ENCODE measurements at regions of chr14 and their contacts with region 1.

Region 1: DNA sequence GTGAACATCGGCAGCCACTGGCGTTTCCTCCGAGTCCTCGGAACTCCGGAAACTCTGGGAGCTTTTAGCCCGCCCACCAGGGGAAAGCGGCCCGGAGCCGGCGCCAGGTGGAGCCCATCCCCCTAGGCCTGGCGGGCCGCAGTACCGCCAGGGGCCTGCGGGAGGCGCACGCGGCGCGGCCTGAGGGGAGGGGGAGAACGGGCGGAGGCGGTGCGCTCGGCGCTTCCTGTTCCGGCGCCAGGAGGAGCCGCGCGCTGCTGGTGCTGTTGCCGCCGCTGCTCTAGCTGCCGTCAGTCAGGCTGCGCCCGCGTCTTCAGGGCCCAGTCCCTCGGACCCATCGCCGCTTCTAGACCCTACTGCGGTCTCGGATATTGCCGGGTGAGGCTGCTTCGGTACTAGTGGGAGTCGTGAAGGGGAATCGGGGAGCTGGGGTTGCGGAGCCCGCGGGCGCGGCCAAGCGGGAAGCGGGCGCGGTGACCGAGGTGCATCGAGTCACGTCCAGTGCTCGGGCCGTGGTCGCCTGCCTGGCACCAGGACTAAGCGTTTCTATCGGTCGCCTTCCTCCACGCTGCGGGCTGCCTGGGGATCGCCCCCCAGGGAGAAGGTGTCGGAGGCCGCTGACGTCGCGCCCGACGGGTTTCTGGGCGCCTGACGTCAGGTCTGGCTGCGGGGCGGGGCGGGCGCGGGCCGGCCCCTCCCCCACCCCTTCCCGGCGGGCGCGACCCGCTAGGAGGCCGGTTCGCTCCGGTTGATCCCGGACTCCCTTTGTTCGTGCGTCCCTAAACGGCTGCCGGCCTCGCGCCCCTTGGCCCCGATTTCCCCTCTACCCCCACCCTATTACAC is at the start of gene MAPK1IP1L:
- DNase-seq: peak; percentile 95
- ATAC-seq: peak; percentile 93
- H3K4me3 ChIP-seq: peak within 1 kb of the TSS; percentile 69 to 99 (median 97)
- H3K4me3 Mint-ChIP-seq: peak within 1 kb of the TSS; percentile 93
- H3K27ac ChIP-seq: peak within 1 kb of the TSS; percentile 100
- H3K27ac Mint-ChIP-seq: peak within 1 kb of the TSS; percentile 95
- H3K4me1 ChIP-seq: peaks cover 18 to 25% of the 10 kb centered on the region in 2 donors
- H3K4me1 Mint-ChIP-seq: peaks cover 39% of the 10 kb centered on the region
- H3K27me3 ChIP-seq: no peaks in the 10 kb centered on the region
- H3K27me3 Mint-ChIP-seq: no peaks in the 10 kb centered on the region
- CTCF ChIP-seq: peak; percentile 99
- total RNA-seq, gene MAPK1IP1L: 108 and 116 TPM in 2 replicates

Region 2: DNA sequence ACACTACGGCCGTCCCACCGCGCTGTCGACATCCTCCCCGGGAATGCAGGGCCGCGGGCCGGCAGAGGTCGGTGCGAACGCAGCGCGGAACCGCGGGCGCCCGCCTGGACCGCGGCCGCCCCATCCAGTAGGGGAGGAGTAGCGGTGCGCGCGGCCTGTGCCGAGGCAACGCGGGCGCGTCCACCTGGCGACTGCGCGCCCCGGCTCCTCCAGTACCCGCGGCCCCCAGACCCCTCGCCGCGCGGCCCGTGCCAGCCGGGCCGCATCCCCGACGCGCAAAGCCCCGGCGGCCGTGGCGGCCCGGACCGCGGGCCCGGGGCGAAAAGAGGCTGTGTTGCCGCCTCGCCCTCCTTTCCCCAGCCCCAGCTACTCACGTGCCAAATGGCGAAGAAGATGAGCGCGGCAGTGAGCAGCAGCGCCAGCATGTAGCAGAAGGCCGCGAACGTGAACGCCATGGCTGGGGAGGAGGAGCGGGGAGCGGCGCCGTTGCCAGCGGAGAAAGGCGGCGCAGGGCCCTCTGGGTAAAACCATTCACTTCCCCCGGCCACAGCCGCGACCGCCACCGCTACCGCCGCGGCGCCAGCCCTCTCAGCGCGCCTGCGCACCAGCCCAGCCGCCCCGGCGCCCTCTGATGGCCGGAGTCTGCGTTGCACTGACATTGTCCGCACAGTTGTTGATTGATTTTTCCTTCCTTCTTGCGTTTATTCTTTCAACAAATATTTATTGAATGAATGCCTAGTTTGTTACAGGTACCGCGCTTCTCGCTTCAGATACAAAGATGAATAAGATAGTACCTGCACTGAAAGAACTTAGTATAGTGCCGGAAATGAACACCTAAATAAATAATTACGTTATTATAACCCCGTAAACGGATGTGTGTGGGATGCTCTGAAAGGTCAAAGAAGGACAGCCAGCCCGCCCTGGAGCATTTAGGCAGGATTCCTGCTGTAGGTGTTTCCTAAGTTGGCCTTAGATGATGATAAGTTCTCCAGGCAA is 610.5 kb before region 1 on chr14 and contains the start of gene CNIH1:
- CTCF ChIA-PET with region 1: no interaction called
- POLR2A ChIA-PET with region 1: no interaction called
- intact Hi-C with region 1: loop called (anchors 5 kb)
- DNase-seq: peak; percentile 96
- ATAC-seq: peak; percentile 93
- H3K4me3 ChIP-seq: peak within 1 kb of the TSS; percentile 51 to 73 (median 62)
- H3K4me3 Mint-ChIP-seq: peak within 1 kb of the TSS; percentile 90
- H3K27ac ChIP-seq: peak within 1 kb of the TSS; percentile 74 to 82
- H3K27ac Mint-ChIP-seq: peak within 1 kb of the TSS; percentile 90
- H3K4me1 ChIP-seq: peaks cover 26 to 27% of the 10 kb centered on the region in 2 donors
- H3K4me1 Mint-ChIP-seq: peaks cover 46% of the 10 kb centered on the region
- H3K27me3 ChIP-seq: peaks cover 0 to under 1% (median 0%) of the 10 kb centered on the region in 4 experiments
- H3K27me3 Mint-ChIP-seq: peaks cover 3% of the 10 kb centered on the region
- CTCF ChIP-seq: peak; percentile 96
- total RNA-seq, gene CNIH1: 42.8 and 52.0 TPM in 2 replicates

Region 3: GRCh38 chr14:55026793-55027561 is 24.7 kb before region 1 on chr14 and contains the starts of genes SOCS4 and WDHD1:
- CTCF ChIA-PET with region 1: interaction called, 20 read pairs
- POLR2A ChIA-PET with region 1: interaction called, 5 read pairs
- intact Hi-C with region 1: loop called (anchors 1 kb)
- DNase-seq: peak; percentile 97
- ATAC-seq: peak; percentile 93
- H3K4me3 ChIP-seq: peak within 1 kb of the TSS; percentile 62 to 95 (median 90)
- H3K4me3 Mint-ChIP-seq: peak within 1 kb of the TSS; percentile 94
- H3K27ac ChIP-seq: peak within 1 kb of the TSS; percentile 78 to 90
- H3K27ac Mint-ChIP-seq: peak within 1 kb of the TSS; percentile 91
- H3K4me1 ChIP-seq: peaks cover 18 to 30% of the 10 kb centered on the region in 2 donors
- H3K4me1 Mint-ChIP-seq: peaks cover 47% of the 10 kb centered on the region
- H3K27me3 ChIP-seq: no peaks in the 10 kb centered on the region
- H3K27me3 Mint-ChIP-seq: no peaks in the 10 kb centered on the region
- CTCF ChIP-seq: no peak
- total RNA-seq, gene SOCS4: 23.6 and 26.3 TPM in 2 replicates
- total RNA-seq, gene WDHD1: 6.2 and 6.5 TPM in 2 replicates

Region 4: GRCh38 chr14:55071870-55072640 is 20.4 kb after region 1 on chr14:
- CTCF ChIA-PET with region 1: interaction called, 32 read pairs
- POLR2A ChIA-PET with region 1: interaction called, 23 read pairs
- intact Hi-C with region 1: loop called (anchors 1 kb)
- DNase-seq: peak; percentile 86
- ATAC-seq: peak; percentile 75
- H3K4me3 ChIP-seq: peak overlapping the region in 4 of 5 experiments; percentile 4 to 48 (median 31)
- H3K4me3 Mint-ChIP-seq: peak overlapping the region; percentile 81
- H3K27ac ChIP-seq: peak overlapping the region; percentile 84 to 93
- H3K27ac Mint-ChIP-seq: peak overlapping the region; percentile 96
- H3K4me1 ChIP-seq: peaks cover 34 to 52% of the 10 kb centered on the region in 2 donors
- H3K4me1 Mint-ChIP-seq: peaks cover 66% of the 10 kb centered on the region
- H3K27me3 ChIP-seq: no peaks in the 10 kb centered on the region
- H3K27me3 Mint-ChIP-seq: no peaks in the 10 kb centered on the region
- CTCF ChIP-seq: no peak

Region 5: GRCh38 chr14:55160989-55161388 is 109.3 kb after region 1 on chr14:
- CTCF ChIA-PET with region 1: interaction called, 60 read pairs
- POLR2A ChIA-PET with region 1: interaction called, 9 read pairs
- intact Hi-C with region 1: loop called (anchors 1 kb)
- DNase-seq: peak; percentile 60
- ATAC-seq: peak; percentile 85
- H3K4me3 ChIP-seq: no peak overlapping the region
- H3K4me3 Mint-ChIP-seq: no peak overlapping the region
- H3K27ac ChIP-seq: no peak overlapping the region
- H3K27ac Mint-ChIP-seq: no peak overlapping the region
- H3K4me1 ChIP-seq: no peaks in the 10 kb centered on the region
- H3K4me1 Mint-ChIP-seq: peaks cover 2% of the 10 kb centered on the region
- H3K27me3 ChIP-seq: no peaks in the 10 kb centered on the region
- H3K27me3 Mint-ChIP-seq: no peaks in the 10 kb centered on the region
- CTCF ChIP-seq: peak; percentile 74

Measured in B cell (primary cell).